Heart left ventricle (tissue), 16 donors: ENCODE measurements at regions of chr10 and their contacts with region 1.

Region 1: DNA sequence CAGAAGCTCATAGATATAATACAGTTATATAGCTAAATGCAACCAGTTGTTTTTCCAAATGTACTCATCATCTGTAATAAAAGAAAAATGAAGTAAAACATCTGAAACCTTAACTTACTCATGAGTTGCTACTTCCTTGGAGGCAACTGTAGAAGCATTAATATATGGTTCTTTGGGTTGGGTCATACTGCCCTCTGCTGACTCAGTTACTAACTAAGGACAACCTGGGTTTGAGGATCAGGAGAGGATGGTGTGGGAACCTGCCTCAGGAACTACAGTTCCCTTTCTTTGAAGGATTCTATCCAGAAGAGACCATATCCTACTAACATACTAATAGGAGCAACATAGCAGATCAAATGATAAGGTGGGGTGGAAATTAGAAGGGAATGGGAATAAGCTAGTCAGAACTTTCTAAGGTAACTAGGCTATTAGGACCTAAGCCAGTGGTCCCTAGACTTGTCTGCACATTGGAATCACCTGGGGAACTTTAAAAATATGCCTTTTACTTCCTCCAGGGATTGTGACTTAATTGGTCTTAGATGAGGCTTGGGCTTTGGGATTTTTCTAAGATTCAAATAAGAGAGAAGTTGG is 20.7 kb downstream of the COX15 start:
- DNase-seq: no peak
- ATAC-seq: peak in 3 of 4 donors; percentile 64 to 76 (median 73)
- H3K4me3 ChIP-seq: no peak overlapping the region
- H3K27ac ChIP-seq: no peak overlapping the region
- H3K4me1 ChIP-seq: peaks cover 0 to 6% (median 0%) of the 10 kb centered on the region in 12 donors
- H3K27me3 ChIP-seq: no peaks in the 10 kb centered on the region
- CTCF ChIP-seq: peak in 10 of 12 donors; percentile 16 to 60 (median 47)
- POLR2A ChIP-seq: no peak

Region 2: GRCh38 chr10:99395750-99396445 is 315.3 kb before region 1 on chr10:
- intact Hi-C with region 1: loop called in 2 of 10 experiments (anchors 2 to 10 kb)
- DNase-seq: no peak
- ATAC-seq: peak; percentile 4 to 54 (median 22)
- H3K4me3 ChIP-seq: no peak overlapping the region
- H3K27ac ChIP-seq: peak overlapping the region in 1 of 12 donors; percentile 15
- H3K4me1 ChIP-seq: peaks cover 0 to 49% (median 14%) of the 10 kb centered on the region in 12 donors
- H3K27me3 ChIP-seq: no peaks in the 10 kb centered on the region
- CTCF ChIP-seq: no peak
- POLR2A ChIP-seq: no peak

Region 3: DNA sequence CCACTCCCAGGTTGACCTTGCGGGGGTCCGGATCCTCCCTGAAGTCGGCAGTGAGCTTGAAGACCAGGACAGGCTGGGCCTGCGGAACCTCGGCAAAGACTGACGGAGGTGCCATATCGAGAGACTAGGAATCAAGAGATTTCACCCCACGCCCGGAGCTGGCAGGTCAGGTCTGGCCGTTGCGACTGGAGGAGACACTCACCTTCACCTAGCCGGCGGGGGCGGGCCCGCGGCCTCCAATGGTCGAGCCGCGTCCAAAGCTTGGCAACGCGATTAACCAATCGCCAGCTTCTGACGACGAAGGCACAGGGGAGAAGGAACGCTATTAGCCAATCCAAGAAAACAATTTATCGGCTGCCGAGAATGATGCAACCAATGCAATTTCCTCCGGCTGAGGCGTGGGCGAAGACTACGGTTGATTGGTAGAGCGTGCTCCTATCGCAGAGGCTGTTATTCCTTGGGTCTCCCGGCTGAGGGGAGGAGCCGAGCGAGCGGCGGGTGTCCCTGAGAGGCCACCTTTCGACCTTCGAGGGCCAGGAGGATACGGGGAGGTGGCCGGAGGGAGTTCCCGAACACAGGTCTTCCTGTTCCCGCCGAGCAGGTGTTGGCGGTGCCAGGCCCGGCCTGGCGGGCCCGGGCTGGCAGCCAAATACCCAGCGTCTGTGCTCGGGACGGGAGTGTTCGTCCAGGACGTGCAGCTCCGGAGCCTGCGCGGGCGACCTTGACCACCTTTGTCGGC is 280.6 kb before region 1 on chr10 and contains the start of gene GOT1:
- intact Hi-C with region 1: loop called in 4 of 10 experiments (anchors 5 to 10 kb)
- DNase-seq: peak; percentile 94 to 98 (median 96)
- ATAC-seq: peak; percentile 95 to 97 (median 96)
- H3K4me3 ChIP-seq: peak within 1 kb of the TSS; percentile 71 to 96 (median 85)
- H3K27ac ChIP-seq: peak within 1 kb of the TSS; percentile 90 to 99 (median 97)
- H3K4me1 ChIP-seq: peaks cover 0 to 56% (median 30%) of the 10 kb centered on the region in 12 donors
- H3K27me3 ChIP-seq: no peaks in the 10 kb centered on the region
- CTCF ChIP-seq: no peak
- POLR2A ChIP-seq: peak; percentile 50 to 81
- total RNA-seq, gene GOT1: 294 to 815 (median 505) TPM

Region 4: DNA sequence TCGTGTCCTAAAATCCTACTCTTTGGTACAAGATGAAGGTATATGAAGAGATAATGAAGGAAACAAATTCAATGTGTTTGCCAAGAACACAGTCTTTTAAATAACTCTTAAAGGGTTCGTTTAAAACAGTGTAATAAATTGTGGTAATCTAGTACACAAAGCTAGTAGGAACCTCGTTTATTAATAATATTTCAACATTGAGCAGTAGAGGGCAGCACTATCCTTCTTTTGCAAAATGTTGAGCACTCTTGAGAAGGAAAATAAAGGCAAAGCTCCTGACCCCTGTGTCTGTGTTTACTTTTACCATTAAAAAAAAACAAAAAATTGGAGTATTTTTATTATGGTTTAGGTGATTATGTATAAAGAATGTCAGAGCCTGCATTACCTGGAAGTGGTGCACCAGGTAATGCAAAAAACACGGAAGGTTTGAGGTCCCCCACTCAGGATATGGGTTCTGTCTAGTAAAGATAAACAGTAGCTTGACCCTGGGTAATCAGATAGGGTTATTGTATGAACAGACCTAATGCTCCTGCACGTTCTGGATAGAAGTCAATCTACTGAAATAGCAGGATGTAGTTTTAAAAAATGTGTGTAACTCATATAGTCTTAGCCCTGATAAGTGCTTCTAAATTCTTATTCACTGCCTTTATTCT is 275.1 kb before region 1 on chr10:
- intact Hi-C with region 1: loop called in 4 of 10 experiments (anchors 5 to 10 kb)
- DNase-seq: no peak
- ATAC-seq: peak in 2 of 4 donors; percentile 26 to 31
- H3K4me3 ChIP-seq: no peak overlapping the region
- H3K27ac ChIP-seq: peak overlapping the region in 1 of 12 donors; percentile 66
- H3K4me1 ChIP-seq: peaks cover 0 to 40% (median 24%) of the 10 kb centered on the region in 12 donors
- H3K27me3 ChIP-seq: no peaks in the 10 kb centered on the region
- CTCF ChIP-seq: peak; percentile 36 to 69 (median 54)
- POLR2A ChIP-seq: no peak

Region 5: DNA sequence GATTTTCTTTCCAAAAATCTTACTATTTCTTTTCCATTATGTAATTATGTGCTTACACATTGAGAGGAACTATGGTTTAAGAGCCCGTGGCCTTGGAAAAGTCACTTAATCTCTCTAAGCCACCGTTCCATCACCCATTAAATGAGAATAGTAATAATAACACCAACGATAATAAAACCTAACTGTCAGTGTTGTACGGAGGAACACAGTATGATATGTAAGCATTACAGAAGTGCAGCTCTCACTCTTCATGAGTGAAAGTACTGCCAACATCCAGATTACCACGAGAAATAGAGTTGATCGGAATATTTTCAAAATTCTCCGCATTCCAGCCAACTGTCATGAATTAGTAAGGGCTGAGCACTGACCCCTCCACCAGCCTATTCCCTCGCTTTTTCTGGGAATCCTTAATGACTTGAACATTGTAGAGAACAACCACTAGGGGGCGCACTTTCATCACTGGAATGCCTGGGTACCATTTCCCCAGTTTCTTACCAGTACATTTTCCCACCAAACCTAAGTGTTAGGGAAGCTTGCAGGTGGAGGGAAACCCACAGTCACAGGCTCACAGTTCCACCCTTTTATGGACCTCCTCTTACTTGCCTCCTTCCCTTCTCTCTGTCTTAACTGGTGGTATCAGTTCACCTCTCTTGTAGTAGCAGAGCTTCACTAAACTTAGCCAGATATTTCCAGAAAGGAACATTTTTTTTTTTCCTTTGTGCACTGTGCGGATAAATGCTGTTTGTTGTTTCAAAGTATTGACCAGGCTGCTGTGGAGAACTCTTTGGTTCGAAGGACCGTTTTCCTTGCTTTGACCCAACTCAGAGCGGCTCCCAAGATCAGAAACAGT is 150.7 kb before region 1 on chr10:
- intact Hi-C with region 1: loop called in 3 of 10 experiments (anchors 2 to 5 kb)
- DNase-seq: peak in 1 of 5 donors; percentile 29
- ATAC-seq: no peak
- H3K4me3 ChIP-seq: no peak overlapping the region
- H3K27ac ChIP-seq: no peak overlapping the region
- H3K4me1 ChIP-seq: no peaks in the 10 kb centered on the region
- H3K27me3 ChIP-seq: peaks cover 0 to 46% (median 7%) of the 10 kb centered on the region in 9 donors
- CTCF ChIP-seq: peak; percentile 44 to 83 (median 63)
- POLR2A ChIP-seq: no peak

Region 6: DNA sequence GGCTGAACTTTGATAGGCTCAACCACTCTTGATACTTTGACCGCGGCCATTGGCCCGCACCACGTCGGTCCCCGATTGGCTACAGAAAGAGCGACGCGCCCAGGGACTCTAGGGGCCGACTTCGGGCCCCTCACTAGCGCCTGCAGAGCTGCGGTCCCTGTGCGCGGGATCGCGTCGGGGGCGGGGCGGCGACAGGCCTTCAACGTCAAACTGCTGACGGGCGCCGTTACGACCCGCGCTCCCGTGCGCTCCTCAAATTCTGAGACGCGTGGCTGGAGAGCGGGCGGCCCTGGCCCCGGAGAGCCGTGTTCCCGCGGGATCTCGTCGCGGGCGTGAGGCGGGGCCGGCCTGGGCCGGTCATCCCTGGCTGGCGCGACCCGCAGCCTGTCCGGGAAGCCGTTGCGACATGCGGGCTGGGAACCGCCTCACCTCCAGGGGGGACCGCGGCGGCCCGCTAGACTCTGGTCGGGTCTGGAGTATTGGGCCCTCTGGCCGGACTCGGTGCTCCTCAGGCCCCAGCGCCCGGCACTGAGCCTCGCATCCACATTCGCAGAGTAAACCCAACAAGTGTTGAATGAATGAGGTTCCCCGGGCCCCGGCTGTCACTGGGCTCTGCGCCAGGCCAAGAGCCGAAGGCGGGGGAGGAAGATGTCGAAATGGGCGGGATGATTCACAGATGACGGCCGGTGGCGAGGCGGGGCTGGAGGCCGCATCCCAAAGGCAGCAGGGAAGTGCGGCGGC is 90.3 kb before region 1 on chr10:
- intact Hi-C with region 1: loop called in 4 of 10 experiments (anchors 10 kb)
- DNase-seq: peak; percentile 92 to 96 (median 95)
- ATAC-seq: peak; percentile 59 to 95 (median 93)
- H3K4me3 ChIP-seq: peak overlapping the region; percentile 32 to 98 (median 91)
- H3K27ac ChIP-seq: peak overlapping the region; percentile 91 to 100 (median 98)
- H3K4me1 ChIP-seq: peaks cover 10 to 48% (median 36%) of the 10 kb centered on the region in 12 donors
- H3K27me3 ChIP-seq: no peaks in the 10 kb centered on the region
- CTCF ChIP-seq: peak in 1 of 12 donors; percentile 12
- POLR2A ChIP-seq: peak; percentile 42 to 59

Region 7: DNA sequence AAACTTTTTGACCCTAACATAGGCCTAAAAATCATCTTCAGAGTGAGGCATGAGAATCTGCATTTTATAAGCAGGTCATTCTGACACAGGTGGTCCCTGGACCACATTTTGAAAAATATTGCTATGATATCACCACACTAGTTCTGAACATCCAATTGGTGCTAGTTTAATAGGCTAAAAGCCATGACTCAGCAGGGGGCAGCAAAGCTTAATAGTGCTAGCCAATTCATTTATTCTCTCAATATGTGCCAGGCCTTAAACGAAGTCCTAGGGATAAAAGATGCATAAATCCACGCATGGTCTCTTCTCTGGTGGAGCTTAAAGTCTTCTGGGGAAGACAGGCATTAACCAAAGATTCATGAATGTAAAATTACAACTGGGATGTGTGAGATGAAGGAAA is 80.8 kb before region 1 on chr10:
- intact Hi-C with region 1: loop called in 4 of 10 experiments (anchors 5 to 10 kb)
- DNase-seq: no peak
- ATAC-seq: no peak
- H3K4me3 ChIP-seq: no peak overlapping the region
- H3K27ac ChIP-seq: no peak overlapping the region
- H3K4me1 ChIP-seq: no peaks in the 10 kb centered on the region
- H3K27me3 ChIP-seq: no peaks in the 10 kb centered on the region
- CTCF ChIP-seq: peak in 9 of 12 donors; percentile 12 to 43 (median 24)
- POLR2A ChIP-seq: no peak

Region 8: DNA sequence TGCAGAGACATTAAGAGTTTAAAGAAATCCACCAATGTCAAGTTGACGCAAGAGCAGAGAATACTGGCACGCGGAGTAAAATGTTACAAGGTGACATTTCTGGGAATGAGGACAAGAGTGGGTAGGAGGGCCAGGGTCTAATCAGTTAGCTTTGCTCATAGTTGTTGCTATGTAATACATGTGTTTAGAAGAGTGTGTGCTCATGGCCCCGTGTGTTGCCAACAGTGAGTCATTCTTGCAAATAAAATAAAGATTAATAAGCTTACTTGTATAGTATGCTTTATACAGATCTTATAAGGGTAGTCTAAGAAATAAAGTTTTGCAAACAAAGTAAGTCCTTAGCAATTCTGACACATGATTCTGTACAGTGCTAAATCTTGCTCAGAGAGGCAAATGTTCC is 234.0 kb after region 1 on chr10:
- intact Hi-C with region 1: no loop called
- DNase-seq: peak in 2 of 5 donors; percentile 35 to 54
- ATAC-seq: peak; percentile 87 to 98 (median 95)
- H3K4me3 ChIP-seq: no peak overlapping the region
- H3K27ac ChIP-seq: peak overlapping the region in 4 of 12 donors; percentile 15 to 48 (median 45)
- H3K4me1 ChIP-seq: peaks cover 0 to 39% (median 18%) of the 10 kb centered on the region in 12 donors
- H3K27me3 ChIP-seq: no peaks in the 10 kb centered on the region
- CTCF ChIP-seq: no peak
- POLR2A ChIP-seq: no peak

Region 9: GRCh38 chr10:99983280-99983988 is 272.2 kb after region 1 on chr10:
- intact Hi-C with region 1: no loop called
- DNase-seq: peak in 4 of 5 donors; percentile 24 to 58 (median 36)
- ATAC-seq: peak; percentile 75 to 87 (median 82)
- H3K4me3 ChIP-seq: peak overlapping the region in 8 of 12 donors; percentile 3 to 42 (median 14)
- H3K27ac ChIP-seq: peak overlapping the region; percentile 51 to 83 (median 74)
- H3K4me1 ChIP-seq: peaks cover 0 to 57% (median 41%) of the 10 kb centered on the region in 12 donors
- H3K27me3 ChIP-seq: no peaks in the 10 kb centered on the region
- CTCF ChIP-seq: no peak
- POLR2A ChIP-seq: no peak